ENCODE measurements at regions of chr11 and their contacts with region 1.

Region 1: GRCh38 chr11:111926505-111927391 is 8.0 kb downstream of the C11orf52 start:
- DNase-seq: peak; percentile 96 to 98
- H3K4me3 ChIP-seq: peak overlapping the region; percentile 35 to 40
- H3K27ac ChIP-seq: peak overlapping the region; percentile 80 to 89
- H3K4me1 ChIP-seq: peaks cover 0 to 52% (median 33%) of the 10 kb centered on the region in 4 donors
- H3K27me3 ChIP-seq: no peaks in the 10 kb centered on the region
- CTCF ChIP-seq: peak; percentile 17 to 45

Region 2: GRCh38 chr11:111878849-111879636 is 47.7 kb before region 1 on chr11 and contains the starts of genes CFAP68 and FDXACB1:
- intact Hi-C with region 1: loop called (anchors 5 kb)
- DNase-seq: peak; percentile 98
- H3K4me3 ChIP-seq: peak within 1 kb of the TSS; percentile 59 to 77
- H3K27ac ChIP-seq: peak within 1 kb of the TSS; percentile 92 to 94
- H3K4me1 ChIP-seq: peaks cover 0 to 14% (median 9%) of the 10 kb centered on the region in 4 donors
- H3K27me3 ChIP-seq: no peaks in the 10 kb centered on the region
- CTCF ChIP-seq: peak; percentile 96 to 98

Region 3: GRCh38 chr11:111911563-111912401 is 15.0 kb before region 1 on chr11 and contains the start of gene CRYAB:
- intact Hi-C with region 1: loop called (anchors 2 kb)
- DNase-seq: peak; percentile 96 to 99
- H3K4me3 ChIP-seq: peak within 1 kb of the TSS; percentile 70 to 84
- H3K27ac ChIP-seq: peak within 1 kb of the TSS; percentile 92 to 98
- H3K4me1 ChIP-seq: peaks cover 0 to 55% (median 14%) of the 10 kb centered on the region in 4 donors
- H3K27me3 ChIP-seq: no peaks in the 10 kb centered on the region
- CTCF ChIP-seq: no peak

Region 4: GRCh38 chr11:111982019-111982464 is 55.3 kb after region 1 on chr11:
- intact Hi-C with region 1: loop called (anchors 2 kb)
- DNase-seq: peak in 1 of 2 donors; percentile 35
- H3K4me3 ChIP-seq: no peak overlapping the region
- H3K27ac ChIP-seq: peak overlapping the region in 1 of 2 donors; percentile 17
- H3K4me1 ChIP-seq: peaks cover 0 to 30% (median 17%) of the 10 kb centered on the region in 4 donors
- H3K27me3 ChIP-seq: no peaks in the 10 kb centered on the region
- CTCF ChIP-seq: peak; percentile 46 to 49

Region 5: GRCh38 chr11:112355726-112356125 is 429.0 kb after region 1 on chr11:
- intact Hi-C with region 1: no loop called
- DNase-seq: no peak
- H3K4me3 ChIP-seq: no peak overlapping the region
- H3K27ac ChIP-seq: no peak overlapping the region
- H3K4me1 ChIP-seq: no peaks in the 10 kb centered on the region
- H3K27me3 ChIP-seq: no peaks in the 10 kb centered on the region
- CTCF ChIP-seq: no peak